Activated naive CD4-positive, alpha-beta T cell treated with anti-CD3 and anti-CD28 coated beads for 36 hours (primary cell): ENCODE measurements at regions of chr4 and their contacts with region 1.

Region 1: DNA sequence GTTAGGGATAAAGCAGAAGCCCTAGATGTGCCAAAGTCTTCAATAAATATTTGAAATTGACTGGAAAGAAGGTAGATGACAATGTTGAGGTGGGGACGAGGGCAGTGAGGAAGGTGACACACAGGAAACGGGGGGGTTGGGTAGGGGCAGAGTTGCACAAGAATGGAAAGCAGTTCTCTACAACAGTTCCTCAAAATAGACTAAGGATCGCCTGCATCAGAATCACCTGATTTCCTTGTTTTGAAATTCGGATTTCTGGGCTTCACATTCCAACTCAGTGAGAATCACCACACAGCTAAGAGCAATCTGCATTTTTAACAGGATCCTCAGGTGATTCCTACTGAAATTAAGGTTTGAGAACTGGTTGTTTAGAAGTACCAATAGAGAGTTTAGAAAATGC is 70.6 kb downstream of the ARFIP1 start:
- DNase-seq: peak; percentile 74
- H3K4me3 Mint-ChIP-seq: no peak overlapping the region
- H3K27ac Mint-ChIP-seq: no peak overlapping the region
- H3K4me1 Mint-ChIP-seq: peaks cover 16% of the 10 kb centered on the region
- H3K27me3 Mint-ChIP-seq: no peaks in the 10 kb centered on the region

Region 2: DNA sequence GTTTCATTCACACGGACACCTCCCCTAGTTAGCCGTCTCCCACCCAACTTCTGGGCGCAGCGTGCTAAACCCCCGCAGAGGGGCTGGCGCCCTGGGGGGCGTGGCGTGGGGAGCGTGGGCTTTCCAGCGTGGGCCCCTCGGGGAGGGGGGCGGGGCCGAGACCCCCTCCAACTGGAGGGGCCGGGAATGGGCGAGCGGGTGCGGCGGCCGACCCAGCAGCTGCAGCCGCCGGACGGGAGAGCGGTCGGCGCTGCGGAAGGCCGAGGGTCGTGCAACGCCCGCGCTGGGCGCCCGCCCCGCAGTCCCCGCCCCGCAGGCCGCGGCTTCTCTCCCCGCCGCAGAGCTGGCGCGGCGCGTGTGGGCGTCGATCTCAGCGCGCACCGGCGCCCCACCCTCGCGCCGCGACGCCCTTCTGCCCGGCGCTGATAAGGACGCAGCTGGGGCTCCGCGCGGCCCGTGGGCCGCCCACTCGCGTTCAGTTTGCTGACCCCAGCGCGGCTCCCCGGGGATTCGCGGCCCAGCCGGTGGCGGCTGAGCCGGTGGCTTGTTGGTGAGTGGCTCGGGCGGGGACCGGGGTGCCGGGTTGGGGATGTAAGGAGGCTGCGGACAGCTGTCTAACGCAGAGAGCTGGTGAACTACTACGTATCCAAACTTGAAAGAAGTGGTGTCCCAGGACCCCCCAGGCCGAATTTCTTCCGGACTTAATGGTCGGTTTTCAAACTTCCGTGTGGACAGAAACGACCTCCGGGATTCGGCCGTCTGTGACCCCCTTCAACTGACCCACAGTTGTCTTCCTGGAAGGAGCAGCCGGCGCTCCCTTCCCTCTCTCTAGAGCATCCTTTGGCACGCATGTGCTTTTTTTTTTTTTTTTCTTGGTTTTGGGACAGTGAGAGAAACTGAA is 87.2 kb after region 1 on chr4:
- CTCF ChIA-PET with region 1: interaction called, 7 read pairs
- intact Hi-C with region 1: loop called (anchors 2 kb)
- DNase-seq: no peak
- H3K4me3 Mint-ChIP-seq: peak overlapping the region; percentile 67
- H3K27ac Mint-ChIP-seq: no peak overlapping the region
- H3K4me1 Mint-ChIP-seq: peaks cover 16% of the 10 kb centered on the region
- H3K27me3 Mint-ChIP-seq: peaks cover 44% of the 10 kb centered on the region

Region 3: DNA sequence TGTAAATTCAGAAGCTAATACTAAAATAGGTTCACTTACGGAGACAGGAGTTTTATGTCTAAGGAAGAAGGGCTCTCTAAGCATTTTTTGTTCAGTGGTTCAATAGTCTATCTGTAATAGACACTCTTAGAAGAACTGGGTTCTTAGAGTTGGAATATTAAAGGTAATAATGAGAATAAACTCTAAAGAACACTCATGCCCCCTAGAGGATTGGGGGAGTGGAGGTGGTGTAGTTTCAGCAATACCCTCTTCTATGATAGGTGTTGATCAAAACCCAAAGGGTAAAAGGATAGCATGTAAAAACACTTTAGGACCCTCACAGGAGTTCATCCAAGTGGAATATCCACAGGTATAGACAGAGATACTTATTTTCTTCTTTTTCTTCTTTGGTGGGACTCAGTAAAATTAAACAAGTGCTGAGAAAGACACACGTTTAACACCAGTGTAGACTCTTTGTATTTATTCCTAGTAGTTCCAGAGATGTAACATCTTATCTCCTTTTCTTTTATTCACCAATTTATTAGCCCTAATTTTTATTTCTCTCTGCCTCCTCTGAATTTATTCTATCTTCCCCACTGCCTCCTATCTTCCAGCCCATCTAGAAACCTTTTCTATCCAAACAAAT is 468.4 kb after region 1 on chr4:
- CTCF ChIA-PET with region 1: no interaction called
- intact Hi-C with region 1: loop called (anchors 2 kb)
- DNase-seq: peak; percentile 50
- H3K4me3 Mint-ChIP-seq: no peak overlapping the region
- H3K27ac Mint-ChIP-seq: no peak overlapping the region
- H3K4me1 Mint-ChIP-seq: no peaks in the 10 kb centered on the region
- H3K27me3 Mint-ChIP-seq: no peaks in the 10 kb centered on the region

Region 4: DNA sequence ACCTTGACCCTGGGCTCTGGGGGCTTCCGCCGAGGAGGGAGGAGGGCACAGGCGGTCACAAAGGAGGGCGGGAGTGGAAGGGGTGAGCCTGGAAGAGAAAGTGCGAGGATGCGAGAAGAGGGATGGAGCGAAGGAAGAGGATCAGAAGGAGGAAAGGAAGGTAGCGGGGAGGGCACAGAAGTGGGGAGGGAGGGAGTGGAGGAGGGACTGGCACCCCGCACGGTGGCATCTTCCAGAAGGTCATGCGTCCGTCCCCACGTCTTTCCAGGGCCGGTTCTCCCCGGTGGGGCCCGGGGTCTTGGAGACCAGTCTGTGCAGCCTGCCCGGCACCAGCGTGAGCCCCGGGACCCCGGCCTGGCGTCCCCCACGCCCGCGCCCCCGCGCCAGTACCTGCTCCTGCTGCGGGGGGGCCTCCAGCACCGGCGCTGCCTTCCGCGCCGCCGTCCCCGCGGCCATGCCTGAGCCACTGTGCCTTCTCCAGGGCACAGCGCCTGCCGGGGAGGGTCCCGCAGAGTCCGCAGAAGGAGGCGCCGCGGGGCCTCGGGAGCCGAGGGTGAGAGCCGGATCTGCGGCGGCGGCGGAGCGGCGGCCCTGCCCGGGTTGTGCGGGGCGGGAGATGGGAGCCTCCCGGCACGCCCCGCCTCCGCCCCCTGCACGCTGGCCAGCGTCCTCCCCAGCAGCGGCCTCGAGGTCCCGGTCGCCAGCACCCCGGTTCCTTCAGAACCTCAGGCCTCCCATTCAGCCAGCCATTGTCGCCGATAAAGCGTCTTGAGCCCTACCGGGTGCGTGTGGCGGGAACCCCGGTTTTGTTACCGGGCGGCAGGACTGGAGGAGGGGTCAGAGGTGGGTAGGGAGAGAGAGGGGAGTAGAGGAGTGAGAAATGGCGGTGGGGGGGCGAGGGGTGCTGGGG is 909.3 kb after region 1 on chr4 and contains the start of gene RNF175:
- CTCF ChIA-PET with region 1: no interaction called
- intact Hi-C with region 1: loop called (anchors 5 kb)
- DNase-seq: peak; percentile 43
- H3K4me3 Mint-ChIP-seq: peak within 1 kb of the TSS; percentile 65
- H3K27ac Mint-ChIP-seq: no peak within 1 kb of the TSS
- H3K4me1 Mint-ChIP-seq: peaks cover 42% of the 10 kb centered on the region
- H3K27me3 Mint-ChIP-seq: no peaks in the 10 kb centered on the region
- total RNA-seq, gene RNF175: 1.4 to 1.5 TPM